Activated CD4-positive, alpha-beta T cell treated with anti-CD3 and anti-CD28 coated beads for 36 hours (primary cell): ENCODE measurements at regions of chr1 and their contacts with region 1.

Region 1: DNA sequence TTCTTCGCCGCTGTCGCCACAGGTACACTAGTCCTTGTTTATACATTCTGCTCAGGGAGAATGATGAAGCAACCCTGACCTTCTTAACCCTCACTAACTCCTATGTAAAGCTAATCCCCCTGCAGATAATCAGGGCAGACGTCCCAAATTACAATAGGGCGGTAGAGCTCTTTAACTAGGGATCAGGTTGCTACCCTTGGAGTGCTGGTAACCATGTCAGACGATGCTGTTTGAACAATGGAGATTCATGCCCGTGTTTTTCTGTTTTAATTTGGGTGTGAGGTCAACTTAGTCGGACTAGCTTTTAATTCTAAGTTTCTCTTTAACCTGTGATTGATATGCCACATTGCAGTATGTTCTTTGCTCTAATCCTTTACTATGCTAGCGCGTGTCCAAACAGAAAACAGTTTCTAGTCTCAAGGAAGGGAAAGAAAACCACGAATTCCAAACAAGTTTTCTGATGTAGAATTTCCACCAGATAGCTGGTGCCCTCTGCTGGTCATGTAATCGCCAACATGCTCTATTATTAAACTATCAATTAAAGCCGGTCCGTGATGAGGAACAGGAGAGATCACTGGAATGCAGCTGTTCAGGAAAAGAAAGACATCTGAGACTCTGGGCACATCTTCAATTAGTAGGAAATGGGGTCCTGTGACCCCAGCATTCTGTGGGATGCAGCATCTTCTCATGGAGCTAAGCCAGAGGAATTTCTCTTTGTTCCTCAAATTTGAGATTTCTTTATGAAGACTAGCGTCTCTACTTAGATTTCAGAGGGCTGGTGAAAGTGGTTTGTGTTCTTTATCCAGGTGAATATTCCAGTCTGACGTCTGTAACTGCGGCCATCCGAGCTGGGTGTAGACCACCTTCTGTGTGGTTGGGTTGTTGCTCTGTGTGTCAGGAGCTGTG is 18.3 kb upstream of the VAMP3 start:
- DNase-seq: peak; percentile 69
- ATAC-seq: peak; percentile 63
- H3K4me3 Mint-ChIP-seq: peak overlapping the region; percentile 27
- H3K27ac Mint-ChIP-seq: no peak overlapping the region
- H3K4me1 Mint-ChIP-seq: peaks cover 20% of the 10 kb centered on the region
- H3K27me3 Mint-ChIP-seq: peaks cover 8% of the 10 kb centered on the region

Region 2: GRCh38 chr1:7420470-7421100 is 332.2 kb before region 1 on chr1:
- CTCF ChIA-PET with region 1: no interaction called
- POLR2A ChIA-PET with region 1: no interaction called
- intact Hi-C with region 1: no loop called
- DNase-seq: no peak
- ATAC-seq: no peak
- H3K4me3 Mint-ChIP-seq: no peak overlapping the region
- H3K27ac Mint-ChIP-seq: no peak overlapping the region
- H3K4me1 Mint-ChIP-seq: no peaks in the 10 kb centered on the region
- H3K27me3 Mint-ChIP-seq: peaks cover 4% of the 10 kb centered on the region

Region 3: GRCh38 chr1:7539769-7540175 is 213.0 kb before region 1 on chr1:
- CTCF ChIA-PET with region 1: no interaction called
- POLR2A ChIA-PET with region 1: no interaction called
- intact Hi-C with region 1: no loop called
- DNase-seq: peak; percentile 73
- ATAC-seq: peak; percentile 70
- H3K4me3 Mint-ChIP-seq: no peak overlapping the region
- H3K27ac Mint-ChIP-seq: no peak overlapping the region
- H3K4me1 Mint-ChIP-seq: no peaks in the 10 kb centered on the region
- H3K27me3 Mint-ChIP-seq: peaks cover 8% of the 10 kb centered on the region

Region 4: DNA sequence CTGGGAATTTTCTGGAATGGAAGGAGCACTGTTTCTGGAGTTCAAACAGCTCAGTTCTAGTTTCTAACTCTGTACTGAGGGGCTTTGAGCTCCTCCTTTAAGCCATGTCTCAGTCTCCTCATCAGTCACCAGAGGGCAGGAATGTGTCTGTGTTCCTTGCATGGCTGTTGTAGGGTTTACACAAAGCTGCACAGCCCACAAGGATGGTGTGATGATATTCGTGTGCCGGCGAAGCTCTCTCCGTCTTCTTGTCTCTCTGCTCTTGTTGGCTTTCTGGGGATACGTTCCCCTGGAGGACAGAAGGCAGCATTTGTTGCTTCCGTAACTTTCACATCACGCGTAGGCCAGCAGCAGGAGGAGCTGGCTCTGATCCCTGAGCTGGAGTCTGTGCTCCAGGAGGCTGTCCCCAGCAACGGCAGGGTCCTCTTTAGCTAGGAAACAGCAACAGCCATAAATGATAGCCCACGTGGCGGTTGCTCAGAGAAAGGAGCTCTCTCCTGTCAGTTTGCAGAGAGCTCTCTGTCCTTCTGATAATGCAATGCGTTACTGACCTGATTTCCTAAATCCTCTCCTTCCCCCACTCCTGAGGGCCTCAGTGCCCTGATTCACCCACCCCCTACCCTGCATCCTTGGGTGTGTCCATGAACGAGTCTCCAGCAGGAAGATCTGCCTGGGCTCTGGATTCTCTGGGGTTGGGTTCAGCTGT is 170.9 kb before region 1 on chr1:
- CTCF ChIA-PET with region 1: no interaction called
- POLR2A ChIA-PET with region 1: no interaction called
- intact Hi-C with region 1: no loop called
- DNase-seq: no peak
- ATAC-seq: no peak
- H3K4me3 Mint-ChIP-seq: no peak overlapping the region
- H3K27ac Mint-ChIP-seq: no peak overlapping the region
- H3K4me1 Mint-ChIP-seq: no peaks in the 10 kb centered on the region
- H3K27me3 Mint-ChIP-seq: no peaks in the 10 kb centered on the region

Region 5: GRCh38 chr1:7667625-7668218 is 85.0 kb before region 1 on chr1:
- CTCF ChIA-PET with region 1: interaction called, 334 read pairs
- POLR2A ChIA-PET with region 1: no interaction called
- intact Hi-C with region 1: loop called (anchors 1 kb)
- DNase-seq: peak; percentile 90
- ATAC-seq: peak; percentile 83
- H3K4me3 Mint-ChIP-seq: no peak overlapping the region
- H3K27ac Mint-ChIP-seq: no peak overlapping the region
- H3K4me1 Mint-ChIP-seq: no peaks in the 10 kb centered on the region
- H3K27me3 Mint-ChIP-seq: peaks cover 3% of the 10 kb centered on the region

Region 6: GRCh38 chr1:7680207-7680954 is 72.4 kb before region 1 on chr1:
- CTCF ChIA-PET with region 1: interaction called, 25 read pairs
- POLR2A ChIA-PET with region 1: interaction called, 3 read pairs
- intact Hi-C with region 1: no loop called
- DNase-seq: peak; percentile 59
- ATAC-seq: peak; percentile 67
- H3K4me3 Mint-ChIP-seq: peak overlapping the region; percentile 62
- H3K27ac Mint-ChIP-seq: no peak overlapping the region
- H3K4me1 Mint-ChIP-seq: no peaks in the 10 kb centered on the region
- H3K27me3 Mint-ChIP-seq: no peaks in the 10 kb centered on the region

Region 7: GRCh38 chr1:7726623-7727022 is 26.1 kb before region 1 on chr1:
- CTCF ChIA-PET with region 1: interaction called, 13 read pairs
- POLR2A ChIA-PET with region 1: no interaction called
- intact Hi-C with region 1: no loop called
- DNase-seq: no peak
- ATAC-seq: no peak
- H3K4me3 Mint-ChIP-seq: no peak overlapping the region
- H3K27ac Mint-ChIP-seq: no peak overlapping the region
- H3K4me1 Mint-ChIP-seq: peaks cover 6% of the 10 kb centered on the region
- H3K27me3 Mint-ChIP-seq: peaks cover 7% of the 10 kb centered on the region

Region 8: GRCh38 chr1:7902478-7903085 is 149.8 kb after region 1 on chr1:
- CTCF ChIA-PET with region 1: interaction called, 12 read pairs
- POLR2A ChIA-PET with region 1: no interaction called
- intact Hi-C with region 1: no loop called
- DNase-seq: peak; percentile 74
- ATAC-seq: peak; percentile 83
- H3K4me3 Mint-ChIP-seq: no peak overlapping the region
- H3K27ac Mint-ChIP-seq: no peak overlapping the region
- H3K4me1 Mint-ChIP-seq: no peaks in the 10 kb centered on the region
- H3K27me3 Mint-ChIP-seq: peaks cover 4% of the 10 kb centered on the region